Pancreas (tissue), 10 donors: ENCODE measurements at regions of chr10 and their contacts with region 1.

Region 1: GRCh38 chr10:18229826-18230225 is 89.6 kb downstream of the CACNB2 start:
- DNase-seq: no peak
- ATAC-seq: no peak
- H3K4me3 ChIP-seq: no peak overlapping the region
- H3K27ac ChIP-seq: no peak overlapping the region
- H3K4me1 ChIP-seq: no peaks in the 10 kb centered on the region
- H3K27me3 ChIP-seq: no peaks in the 10 kb centered on the region
- CTCF ChIP-seq: no peak

Region 2: DNA sequence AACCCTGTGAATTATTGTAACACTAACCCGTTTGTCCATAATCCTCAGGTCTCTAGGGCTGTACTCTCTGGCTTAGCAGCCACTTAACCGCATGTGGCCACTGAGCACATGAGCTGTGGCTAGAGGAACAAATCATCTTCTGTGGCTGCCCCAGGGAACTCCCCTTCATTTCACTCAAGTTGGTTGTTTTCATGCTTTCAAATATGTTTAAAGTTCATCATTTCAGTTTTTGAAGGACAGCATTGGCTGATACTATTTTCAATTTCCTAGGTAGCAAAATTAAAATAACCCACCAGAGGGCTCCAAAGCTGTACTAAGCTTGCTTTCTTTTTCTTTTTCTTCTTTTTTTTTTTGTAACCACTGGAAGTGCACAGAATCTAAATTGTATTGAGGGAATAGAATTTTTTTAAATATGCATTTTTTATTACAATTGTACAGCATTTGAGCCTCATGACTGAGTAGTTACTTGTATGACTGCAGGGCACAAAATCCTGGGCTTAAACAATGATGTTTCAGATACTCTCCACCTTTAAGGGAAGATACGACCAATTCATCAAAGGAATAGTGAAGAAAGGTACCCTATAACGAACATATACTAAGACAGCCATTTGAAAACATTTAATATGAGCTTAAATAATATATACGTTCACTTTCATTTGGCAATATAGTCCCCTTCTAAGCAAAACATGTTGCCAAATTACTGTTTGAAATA is 382.1 kb before region 1 on chr10:
- intact Hi-C with region 1: loop called in 1 of 3 experiments (anchors 10 kb)
- DNase-seq: no peak
- ATAC-seq: peak in 3 of 4 donors; percentile 65 to 80 (median 69)
- H3K4me3 ChIP-seq: no peak overlapping the region
- H3K27ac ChIP-seq: no peak overlapping the region
- H3K4me1 ChIP-seq: no peaks in the 10 kb centered on the region
- H3K27me3 ChIP-seq: peaks cover 0 to 2% (median 0%) of the 10 kb centered on the region in 4 donors
- CTCF ChIP-seq: peak in 3 of 4 donors; percentile 12 to 25 (median 21)

Region 3: DNA sequence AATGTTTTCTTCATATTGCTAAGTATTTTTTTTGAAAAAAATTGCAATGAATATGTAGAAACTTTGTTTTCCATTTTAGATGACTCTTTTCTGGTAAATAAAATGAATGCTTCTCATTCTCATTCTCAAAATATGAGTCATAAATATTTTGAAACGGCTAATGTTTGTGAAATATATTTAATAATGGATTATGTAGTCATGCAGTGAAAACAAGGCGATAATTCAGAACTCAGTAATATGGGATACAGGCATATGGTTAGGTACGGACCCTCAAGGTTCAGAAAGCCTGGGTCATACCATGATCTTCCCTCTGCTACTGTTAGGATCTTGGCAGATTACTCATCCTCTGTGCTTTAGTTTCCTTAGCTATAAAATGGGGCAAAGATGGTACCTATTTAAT is 324.3 kb before region 1 on chr10:
- intact Hi-C with region 1: loop called in 1 of 3 experiments (anchors 10 kb)
- DNase-seq: no peak
- ATAC-seq: no peak
- H3K4me3 ChIP-seq: no peak overlapping the region
- H3K27ac ChIP-seq: no peak overlapping the region
- H3K4me1 ChIP-seq: no peaks in the 10 kb centered on the region
- H3K27me3 ChIP-seq: peaks cover 0 to 5% (median 1%) of the 10 kb centered on the region in 4 donors
- CTCF ChIP-seq: no peak